Mammary epithelial cell (primary cell): ENCODE measurements at regions of chr3 and their contacts with region 1.

Region 1: DNA sequence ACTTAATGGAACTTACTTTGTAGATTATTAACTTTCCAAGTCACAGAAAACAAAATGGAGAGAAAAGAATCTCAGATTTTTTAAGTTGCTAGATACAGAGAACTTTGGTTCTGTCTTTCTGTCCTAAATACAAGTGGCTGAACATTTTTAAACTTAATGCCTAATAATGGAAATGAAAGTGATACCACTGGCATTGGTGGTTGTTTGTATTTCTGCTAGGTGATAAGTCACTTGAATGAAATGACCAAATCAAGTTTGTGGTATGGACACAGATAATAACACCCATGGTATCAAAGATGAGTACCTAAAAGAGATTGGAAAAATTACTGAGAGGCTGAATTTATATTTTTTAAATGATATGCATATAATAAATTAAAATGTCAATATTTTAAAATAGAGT is 502.1 kb downstream of the CNTN6 start:
- DNase-seq: no peak
- H3K4me3 ChIP-seq: no peak overlapping the region
- H3K27ac ChIP-seq: no peak overlapping the region
- H3K4me1 ChIP-seq: no peaks in the 10 kb centered on the region
- H3K27me3 ChIP-seq: no peaks in the 10 kb centered on the region
- CTCF ChIP-seq: no peak

Region 2: GRCh38 chr3:1555921-1556320 is 39.0 kb before region 1 on chr3:
- CTCF ChIA-PET with region 1: no interaction called
- dilution Hi-C with region 1: no loop called
- in situ Hi-C with region 1: no loop called
- intact Hi-C with region 1: loop called (anchors 2 kb)
- DNase-seq: no peak
- H3K4me3 ChIP-seq: no peak overlapping the region
- H3K27ac ChIP-seq: no peak overlapping the region
- H3K4me1 ChIP-seq: no peaks in the 10 kb centered on the region
- H3K27me3 ChIP-seq: no peaks in the 10 kb centered on the region
- CTCF ChIP-seq: no peak